CD4-positive, alpha-beta T cell (primary cell): ENCODE measurements at regions of chr14 and their contacts with region 1.

Region 1: DNA sequence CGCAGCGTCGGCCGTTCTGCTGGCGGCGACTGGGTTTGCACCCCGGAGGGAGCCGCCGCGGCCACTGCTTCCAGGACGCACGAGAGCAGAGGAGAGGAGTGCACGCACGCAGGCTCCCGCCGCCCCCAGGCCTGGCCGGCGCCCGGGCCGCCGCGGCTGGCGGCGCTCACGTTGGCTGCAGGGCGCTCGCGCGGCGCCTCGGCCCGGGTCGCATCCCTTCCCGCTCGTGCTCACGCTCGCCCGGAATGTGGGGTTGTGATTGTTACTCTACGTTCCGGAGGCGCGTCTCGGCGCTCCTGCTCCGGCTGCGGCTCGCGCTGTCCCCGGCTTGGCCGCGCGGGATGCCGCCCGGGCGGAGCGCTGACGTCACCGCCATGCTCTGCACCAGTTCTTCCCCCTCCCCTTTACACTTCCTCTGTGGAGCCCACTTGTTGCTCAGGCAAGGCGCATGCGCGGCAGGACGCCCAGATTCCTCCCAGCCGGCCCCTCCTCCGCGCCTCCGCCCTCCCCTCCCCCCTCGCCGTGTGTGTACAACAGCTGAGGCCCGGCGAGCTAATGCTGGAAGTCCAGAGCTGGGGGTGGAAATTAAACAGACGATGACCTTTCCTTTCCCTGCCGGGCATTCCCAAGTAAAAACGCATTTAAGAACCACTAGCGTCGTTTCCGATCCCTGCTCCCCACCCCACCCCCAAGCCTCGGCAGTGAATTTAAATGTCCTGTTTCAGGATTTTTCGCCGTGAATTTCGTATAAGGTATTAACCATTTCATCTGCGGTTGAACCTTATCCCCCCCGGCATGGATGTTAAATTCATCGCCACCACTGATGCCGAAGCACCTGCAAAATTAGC is at the start of gene IRF2BPL:
- DNase-seq: peak; percentile 88 to 98 (median 94)
- ATAC-seq: peak; percentile 66
- H3K4me3 ChIP-seq: peak within 1 kb of the TSS; percentile 95
- H3K4me3 Mint-ChIP-seq: peak within 1 kb of the TSS; percentile 93
- H3K27ac ChIP-seq: peak within 1 kb of the TSS; percentile 95
- H3K27ac Mint-ChIP-seq: peak within 1 kb of the TSS; percentile 100
- H3K4me1 ChIP-seq: peaks cover 84% of the 10 kb centered on the region
- H3K4me1 Mint-ChIP-seq: peaks cover 64% of the 10 kb centered on the region
- H3K27me3 ChIP-seq: no peaks in the 10 kb centered on the region
- H3K27me3 Mint-ChIP-seq: no peaks in the 10 kb centered on the region
- CTCF ChIP-seq: no peak
- total RNA-seq, gene IRF2BPL: 70.9 to 71.8 TPM

Region 2: GRCh38 chr14:76034566-76034965 is 994.0 kb before region 1 on chr14:
- CTCF ChIA-PET with region 1: no interaction called
- POLR2A ChIA-PET with region 1: no interaction called
- intact Hi-C with region 1: no loop called
- DNase-seq: no peak
- ATAC-seq: no peak
- H3K4me3 ChIP-seq: no peak overlapping the region
- H3K4me3 Mint-ChIP-seq: no peak overlapping the region
- H3K27ac ChIP-seq: no peak overlapping the region
- H3K27ac Mint-ChIP-seq: no peak overlapping the region
- H3K4me1 ChIP-seq: no peaks in the 10 kb centered on the region
- H3K4me1 Mint-ChIP-seq: no peaks in the 10 kb centered on the region
- H3K27me3 ChIP-seq: no peaks in the 10 kb centered on the region
- H3K27me3 Mint-ChIP-seq: no peaks in the 10 kb centered on the region
- CTCF ChIP-seq: no peak

Region 3: DNA sequence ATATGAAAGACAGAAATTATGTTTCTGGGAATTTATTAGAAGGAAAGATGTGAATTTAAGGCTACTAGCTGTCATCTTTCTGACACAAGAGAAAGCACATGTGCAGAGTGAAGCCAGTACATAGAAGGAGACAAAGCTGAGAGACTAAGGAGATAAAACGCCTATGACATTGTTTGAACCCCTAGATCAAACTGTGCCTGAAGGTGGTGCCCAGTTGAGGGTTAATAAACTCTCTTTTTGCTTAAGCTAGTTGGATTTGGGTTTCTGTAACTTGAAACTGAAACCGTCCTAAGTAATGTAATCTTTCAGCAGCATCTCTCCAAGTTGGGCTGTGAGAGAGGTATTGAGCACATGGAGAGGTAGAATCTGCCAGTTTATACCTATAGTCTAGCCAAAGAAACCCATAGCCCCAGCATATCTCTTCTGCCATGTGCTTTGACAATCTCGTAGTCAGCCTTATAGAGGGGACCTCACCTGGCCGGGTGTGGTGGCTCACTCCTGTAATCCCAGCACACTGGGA is 118.2 kb before region 1 on chr14:
- CTCF ChIA-PET with region 1: interaction called, 11 read pairs
- POLR2A ChIA-PET with region 1: interaction called, 6 read pairs
- intact Hi-C with region 1: loop called in 1 of 2 experiments (anchors 5 kb)
- DNase-seq: no peak
- ATAC-seq: no peak
- H3K4me3 ChIP-seq: no peak overlapping the region
- H3K4me3 Mint-ChIP-seq: no peak overlapping the region
- H3K27ac ChIP-seq: no peak overlapping the region
- H3K27ac Mint-ChIP-seq: no peak overlapping the region
- H3K4me1 ChIP-seq: peaks cover 40% of the 10 kb centered on the region
- H3K4me1 Mint-ChIP-seq: peaks cover 36% of the 10 kb centered on the region
- H3K27me3 ChIP-seq: no peaks in the 10 kb centered on the region
- H3K27me3 Mint-ChIP-seq: no peaks in the 10 kb centered on the region
- CTCF ChIP-seq: no peak

Region 4: GRCh38 chr14:76929927-76930326 is 98.7 kb before region 1 on chr14:
- CTCF ChIA-PET with region 1: interaction called, 4 read pairs
- POLR2A ChIA-PET with region 1: interaction called, 19 read pairs
- intact Hi-C with region 1: no loop called
- DNase-seq: peak; percentile 40 to 92 (median 60)
- ATAC-seq: peak; percentile 84
- H3K4me3 ChIP-seq: peak overlapping the region; percentile 20
- H3K4me3 Mint-ChIP-seq: peak overlapping the region; percentile 68
- H3K27ac ChIP-seq: peak overlapping the region; percentile 43 to 52
- H3K27ac Mint-ChIP-seq: peak overlapping the region; percentile 86
- H3K4me1 ChIP-seq: peaks cover 78% of the 10 kb centered on the region
- H3K4me1 Mint-ChIP-seq: peaks cover 75% of the 10 kb centered on the region
- H3K27me3 ChIP-seq: no peaks in the 10 kb centered on the region
- H3K27me3 Mint-ChIP-seq: no peaks in the 10 kb centered on the region
- CTCF ChIP-seq: no peak

Region 5: DNA sequence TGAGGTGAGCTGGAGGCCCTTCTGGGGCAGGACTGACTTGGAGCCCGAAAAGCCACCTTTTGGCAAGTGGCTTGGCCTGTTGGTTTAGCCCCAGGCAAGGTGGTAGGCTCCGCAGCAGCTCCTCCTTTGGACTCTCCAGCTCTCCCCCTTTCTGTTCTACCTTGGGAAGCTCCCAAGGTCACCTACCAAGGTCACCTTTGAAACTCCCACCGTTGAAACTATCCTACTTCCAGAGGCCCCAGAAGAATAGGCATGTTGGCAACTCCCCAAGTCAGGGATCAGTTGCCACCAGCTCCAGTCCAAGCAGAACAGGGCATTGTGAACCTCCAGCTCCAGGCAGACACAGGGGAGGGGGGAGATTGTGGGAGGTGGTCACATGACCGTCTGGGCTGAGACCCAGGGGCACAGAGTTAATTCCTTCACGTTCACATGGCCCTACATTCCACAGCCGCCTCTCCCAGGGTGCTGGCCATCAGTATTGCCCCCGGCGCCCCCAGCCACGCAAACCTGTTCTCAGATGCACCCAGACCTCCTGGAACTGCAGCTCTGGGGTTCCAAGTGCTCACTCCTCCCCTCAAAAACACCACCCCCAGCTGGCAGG is 14.5 kb before region 1 on chr14:
- CTCF ChIA-PET with region 1: interaction called, 4 read pairs
- POLR2A ChIA-PET with region 1: interaction called, 14 read pairs
- intact Hi-C with region 1: no loop called
- DNase-seq: no peak
- ATAC-seq: no peak
- H3K4me3 ChIP-seq: no peak overlapping the region
- H3K4me3 Mint-ChIP-seq: no peak overlapping the region
- H3K27ac ChIP-seq: no peak overlapping the region
- H3K27ac Mint-ChIP-seq: no peak overlapping the region
- H3K4me1 ChIP-seq: peaks cover 16% of the 10 kb centered on the region
- H3K4me1 Mint-ChIP-seq: peaks cover 23% of the 10 kb centered on the region
- H3K27me3 ChIP-seq: no peaks in the 10 kb centered on the region
- H3K27me3 Mint-ChIP-seq: no peaks in the 10 kb centered on the region
- CTCF ChIP-seq: no peak

Region 6: DNA sequence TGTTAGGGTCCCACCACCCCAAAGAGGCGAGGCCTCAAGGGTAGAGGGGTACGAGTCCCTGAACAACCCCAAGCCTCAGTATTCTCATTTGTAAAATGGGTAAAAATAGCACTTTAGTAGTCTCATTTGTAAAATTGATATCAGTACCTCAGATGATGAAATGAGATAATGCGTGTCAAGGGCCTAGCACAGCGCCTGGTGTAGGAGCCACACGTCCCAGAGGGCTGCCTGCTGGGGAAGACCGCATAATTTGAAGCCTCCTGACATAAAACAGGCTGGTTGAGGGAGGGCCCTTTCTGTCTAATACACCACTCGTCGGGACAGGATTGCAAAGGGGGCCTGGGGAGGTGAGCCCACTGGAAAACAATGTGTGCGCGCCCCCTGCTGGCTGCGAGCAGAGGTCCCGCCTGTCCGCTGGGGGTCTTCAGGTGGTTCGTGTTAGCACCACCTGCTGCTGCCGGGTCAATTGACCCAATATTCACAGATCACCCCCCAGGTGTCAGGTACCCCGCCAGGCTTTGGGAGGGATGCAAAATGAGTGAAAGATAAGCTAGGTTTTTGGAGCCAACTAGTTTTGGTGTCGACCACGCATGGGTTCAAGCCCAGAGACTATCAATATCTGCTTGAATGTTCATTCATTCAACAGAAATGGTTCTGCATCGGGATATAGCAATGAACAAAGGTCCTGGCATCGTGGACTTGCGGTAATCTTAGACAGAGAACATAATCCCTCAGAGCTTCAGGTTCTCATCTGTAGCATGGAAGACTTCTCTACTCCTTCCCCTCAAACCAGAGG is 24.6 kb after region 1 on chr14:
- CTCF ChIA-PET with region 1: interaction called, 10 read pairs
- POLR2A ChIA-PET with region 1: interaction called, 4 read pairs
- intact Hi-C with region 1: loop called in 1 of 2 experiments (anchors 2 kb)
- DNase-seq: peak; percentile 62 to 90 (median 72)
- ATAC-seq: peak; percentile 87
- H3K4me3 ChIP-seq: no peak overlapping the region
- H3K4me3 Mint-ChIP-seq: no peak overlapping the region
- H3K27ac ChIP-seq: no peak overlapping the region
- H3K27ac Mint-ChIP-seq: no peak overlapping the region
- H3K4me1 ChIP-seq: peaks cover 28% of the 10 kb centered on the region
- H3K4me1 Mint-ChIP-seq: peaks cover 18% of the 10 kb centered on the region
- H3K27me3 ChIP-seq: no peaks in the 10 kb centered on the region
- H3K27me3 Mint-ChIP-seq: no peaks in the 10 kb centered on the region
- CTCF ChIP-seq: peak; percentile 95